Calu3 (cell line): ENCODE measurements at regions of chr10 and their contacts with region 1.

Region 1: DNA sequence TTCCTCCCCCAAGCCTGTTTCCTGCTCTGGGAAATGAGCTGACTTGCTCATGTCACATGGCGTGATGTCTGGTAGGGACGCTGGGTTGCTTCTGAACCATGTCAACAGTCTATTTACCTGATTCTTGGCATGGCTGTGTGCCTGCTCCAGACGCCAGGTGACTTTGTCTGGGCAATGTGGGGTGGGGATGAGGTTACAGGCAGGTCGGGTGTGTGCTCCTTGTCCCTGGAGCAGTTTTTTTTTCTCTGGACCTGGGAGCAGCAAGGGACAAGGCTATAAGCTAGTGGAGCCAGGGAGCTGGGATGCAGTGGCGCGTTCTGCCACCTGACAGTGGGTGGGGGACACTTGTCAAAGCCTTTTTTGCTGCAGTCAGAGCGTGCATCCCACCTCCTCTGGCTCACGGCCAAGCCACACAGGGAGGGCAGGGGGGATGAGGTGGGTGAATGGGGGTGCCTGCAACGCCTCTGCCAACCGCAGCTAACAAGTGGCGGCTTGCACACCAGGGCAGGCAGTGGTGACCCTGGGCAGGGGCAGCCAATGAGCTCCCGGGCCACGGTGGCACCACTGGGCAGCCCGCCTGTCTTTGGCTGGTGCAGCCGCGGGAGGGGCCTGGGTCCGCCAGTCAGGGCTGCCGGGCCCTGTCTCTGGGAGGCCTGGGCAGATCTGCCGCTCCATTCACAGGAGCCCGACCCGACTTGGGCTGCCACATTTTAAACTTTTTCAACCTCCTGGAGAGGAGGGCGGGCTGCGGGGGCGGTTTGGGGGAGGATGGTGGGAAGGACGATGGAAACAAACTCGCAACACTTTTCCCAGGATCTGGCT is 22.9 kb downstream of the DNAJB12 start:
- DNase-seq: peak; percentile 100
- H3K4me3 Mint-ChIP-seq: peak overlapping the region; percentile 51
- H3K27ac Mint-ChIP-seq: peak overlapping the region; percentile 100
- H3K4me1 Mint-ChIP-seq: peaks cover 83% of the 10 kb centered on the region
- H3K27me3 Mint-ChIP-seq: no peaks in the 10 kb centered on the region
- CTCF ChIP-seq: peak; percentile 66

Region 2: DNA sequence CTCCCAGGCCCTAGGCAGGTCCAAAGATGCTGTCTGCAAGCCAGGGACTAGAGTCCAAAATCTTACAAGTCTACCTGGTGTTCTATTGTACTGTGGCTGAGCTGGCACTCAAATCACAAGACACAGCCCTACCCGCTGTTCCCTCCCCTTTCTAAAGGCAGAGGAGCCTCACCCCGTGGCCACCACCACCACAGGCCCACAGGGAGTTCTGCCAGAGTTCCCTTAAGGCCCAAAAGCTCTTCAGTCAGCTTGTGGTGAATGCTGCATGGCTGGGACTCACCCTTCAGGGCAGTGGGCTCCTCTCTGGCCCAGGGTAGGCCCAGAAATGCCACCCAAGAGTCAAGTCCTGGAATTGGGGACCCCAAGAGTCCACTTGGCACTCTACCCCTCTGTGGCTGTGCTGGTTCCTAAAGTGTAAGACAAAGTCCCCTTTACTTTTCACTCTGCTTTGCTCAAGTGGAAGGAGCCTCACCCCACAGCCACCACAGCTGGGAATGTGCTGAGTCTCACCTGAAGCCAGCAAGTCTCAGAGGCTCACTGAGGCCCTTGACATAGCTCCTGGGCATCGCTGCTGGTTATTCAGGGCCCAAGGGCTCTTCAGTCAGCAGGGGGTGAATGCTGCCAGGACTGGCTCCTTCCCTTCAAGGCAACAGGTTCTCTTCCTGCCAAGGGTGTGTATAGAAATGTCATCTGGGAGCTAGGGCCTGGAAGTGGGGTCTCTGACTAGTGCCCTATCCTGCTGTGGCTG is 432.0 kb before region 1 on chr10:
- CTCF ChIA-PET with region 1: interaction called, 4 read pairs
- intact Hi-C with region 1: loop called (anchors 5 kb)
- DNase-seq: no peak
- H3K4me3 Mint-ChIP-seq: no peak overlapping the region
- H3K27ac Mint-ChIP-seq: no peak overlapping the region
- H3K4me1 Mint-ChIP-seq: peaks cover 8% of the 10 kb centered on the region
- H3K27me3 Mint-ChIP-seq: no peaks in the 10 kb centered on the region
- CTCF ChIP-seq: no peak

Region 3: GRCh38 chr10:72097448-72098300 is 234.1 kb before region 1 on chr10:
- CTCF ChIA-PET with region 1: interaction called, 5 read pairs
- intact Hi-C with region 1: loop called (anchors 10 kb)
- DNase-seq: peak; percentile 81
- H3K4me3 Mint-ChIP-seq: peak overlapping the region; percentile 44
- H3K27ac Mint-ChIP-seq: peak overlapping the region; percentile 97
- H3K4me1 Mint-ChIP-seq: peaks cover 65% of the 10 kb centered on the region
- H3K27me3 Mint-ChIP-seq: no peaks in the 10 kb centered on the region
- CTCF ChIP-seq: no peak

Region 4: DNA sequence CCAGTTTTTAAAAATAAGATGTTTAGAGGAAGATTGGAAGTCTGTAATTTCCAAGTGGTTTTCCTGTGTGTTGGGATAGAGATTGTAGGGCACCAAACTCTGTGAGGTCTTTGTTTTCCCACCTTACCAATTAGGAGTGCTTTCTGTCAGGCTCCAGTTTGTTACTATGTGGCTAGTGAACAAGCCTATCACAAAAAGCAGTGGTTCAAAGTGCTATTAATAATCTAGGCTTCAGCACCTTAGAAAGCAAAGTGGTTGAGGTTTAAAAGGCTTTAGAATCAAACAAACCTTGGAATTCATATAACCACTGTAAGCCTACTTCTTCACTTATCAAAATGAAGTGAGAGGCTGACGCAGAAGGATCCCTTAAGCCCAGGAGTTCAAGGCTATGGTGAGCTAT is 127.1 kb before region 1 on chr10:
- CTCF ChIA-PET with region 1: no interaction called
- intact Hi-C with region 1: no loop called
- DNase-seq: no peak
- H3K4me3 Mint-ChIP-seq: no peak overlapping the region
- H3K27ac Mint-ChIP-seq: no peak overlapping the region
- H3K4me1 Mint-ChIP-seq: no peaks in the 10 kb centered on the region
- H3K27me3 Mint-ChIP-seq: no peaks in the 10 kb centered on the region
- CTCF ChIP-seq: no peak

Region 5: DNA sequence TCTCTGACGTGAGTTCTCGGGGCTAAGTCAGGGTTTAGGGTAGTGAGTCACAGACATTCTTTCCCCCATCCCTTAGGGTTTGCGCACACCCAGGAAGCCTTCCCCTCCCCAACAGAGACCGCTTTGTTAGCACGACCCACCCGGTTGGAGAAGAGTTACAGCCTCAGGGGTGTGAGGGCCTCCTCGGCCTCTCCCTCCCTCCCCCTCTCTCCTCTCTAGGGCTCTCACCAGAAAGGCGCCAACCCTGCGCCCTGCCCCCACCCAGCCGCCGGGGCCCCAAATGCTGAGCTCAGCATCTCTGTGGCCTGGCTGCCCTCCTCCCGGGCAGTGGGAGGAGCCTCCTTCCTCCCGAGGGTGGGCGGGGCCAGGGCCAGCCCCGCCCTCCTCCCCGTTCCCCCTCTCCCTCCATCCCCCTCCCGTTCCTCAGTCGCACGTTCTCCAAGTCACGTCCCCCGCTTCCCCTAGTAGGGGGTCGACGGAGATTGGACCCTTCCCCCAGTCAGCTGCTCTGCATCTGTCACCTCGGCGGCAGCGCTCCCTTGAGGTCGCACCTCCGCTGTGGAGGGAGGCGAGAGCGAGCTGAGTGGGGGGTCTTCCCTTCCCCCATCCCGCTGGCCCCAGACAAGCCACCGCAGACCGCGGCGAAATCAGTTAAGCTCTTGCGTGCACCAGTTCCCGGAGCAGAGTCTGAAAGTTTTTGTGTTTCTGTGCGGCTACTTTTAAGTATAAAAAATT is 71.1 kb before region 1 on chr10:
- CTCF ChIA-PET with region 1: interaction called, 24 read pairs
- intact Hi-C with region 1: no loop called
- DNase-seq: peak; percentile 100
- H3K4me3 Mint-ChIP-seq: peak overlapping the region; percentile 67
- H3K27ac Mint-ChIP-seq: peak overlapping the region; percentile 98
- H3K4me1 Mint-ChIP-seq: peaks cover 59% of the 10 kb centered on the region
- H3K27me3 Mint-ChIP-seq: no peaks in the 10 kb centered on the region
- CTCF ChIP-seq: no peak

Region 6: DNA sequence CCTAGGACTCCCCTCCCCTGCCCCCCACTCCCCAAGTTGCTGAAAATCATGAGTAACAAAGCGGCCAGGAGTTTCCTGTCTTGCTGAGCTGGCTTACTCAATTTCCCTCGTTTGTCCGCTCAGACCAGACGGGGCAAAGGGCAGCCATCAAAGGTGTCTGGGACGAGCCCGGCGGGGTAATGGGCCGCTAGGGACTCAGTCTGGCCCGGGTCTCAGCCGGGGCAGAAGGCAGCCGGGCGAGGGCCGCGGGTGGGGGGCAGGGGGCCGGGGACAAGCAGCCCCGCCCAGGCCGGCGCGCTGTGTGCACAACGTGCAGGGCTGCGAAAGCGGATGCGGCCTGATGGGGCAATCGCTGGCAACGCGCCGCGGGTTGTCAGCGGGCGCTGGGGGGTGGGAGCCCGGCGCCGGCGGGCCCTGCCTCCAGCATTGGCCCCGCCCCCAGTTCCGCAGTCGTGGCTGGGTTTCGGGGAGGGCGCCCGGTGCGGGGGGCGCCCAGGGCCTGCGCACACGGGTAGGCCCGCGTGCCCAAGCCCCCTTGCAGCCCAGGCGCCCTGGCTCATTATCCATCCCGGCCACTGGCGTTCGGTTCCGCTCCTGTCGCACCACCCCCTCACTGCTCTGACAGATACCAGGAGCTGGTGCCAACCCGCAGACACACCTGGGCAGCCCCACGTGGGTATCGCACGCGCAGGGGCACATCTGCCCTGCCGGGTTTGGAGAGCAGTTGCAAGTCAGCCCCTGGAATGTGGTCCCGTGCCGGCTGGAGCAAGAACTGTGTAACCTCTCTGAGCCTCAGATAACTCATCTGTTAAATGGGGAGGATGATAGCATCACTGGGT is 12.2 kb before region 1 on chr10:
- CTCF ChIA-PET with region 1: interaction called, 53 read pairs
- intact Hi-C with region 1: no loop called
- DNase-seq: peak; percentile 97
- H3K4me3 Mint-ChIP-seq: peak overlapping the region; percentile 46
- H3K27ac Mint-ChIP-seq: peak overlapping the region; percentile 98
- H3K4me1 Mint-ChIP-seq: peaks cover 89% of the 10 kb centered on the region
- H3K27me3 Mint-ChIP-seq: no peaks in the 10 kb centered on the region
- CTCF ChIP-seq: no peak

Region 7: GRCh38 chr10:72525689-72526088 is 193.9 kb after region 1 on chr10:
- CTCF ChIA-PET with region 1: no interaction called
- intact Hi-C with region 1: no loop called
- DNase-seq: no peak
- H3K4me3 Mint-ChIP-seq: peak overlapping the region; percentile 3
- H3K27ac Mint-ChIP-seq: no peak overlapping the region
- H3K4me1 Mint-ChIP-seq: peaks cover 19% of the 10 kb centered on the region
- H3K27me3 Mint-ChIP-seq: no peaks in the 10 kb centered on the region
- CTCF ChIP-seq: no peak